ENCODE measurements at regions of chr2 and their contacts with region 1.

Region 1: GRCh38 chr2:15596968-15597367 is 5.3 kb downstream of the DDX1 start:
- DNase-seq: no peak
- H3K4me3 Mint-ChIP-seq: no peak overlapping the region
- H3K27ac Mint-ChIP-seq: no peak overlapping the region
- H3K4me1 Mint-ChIP-seq: peaks cover 25% of the 10 kb centered on the region
- H3K27me3 Mint-ChIP-seq: no peaks in the 10 kb centered on the region

Region 2: DNA sequence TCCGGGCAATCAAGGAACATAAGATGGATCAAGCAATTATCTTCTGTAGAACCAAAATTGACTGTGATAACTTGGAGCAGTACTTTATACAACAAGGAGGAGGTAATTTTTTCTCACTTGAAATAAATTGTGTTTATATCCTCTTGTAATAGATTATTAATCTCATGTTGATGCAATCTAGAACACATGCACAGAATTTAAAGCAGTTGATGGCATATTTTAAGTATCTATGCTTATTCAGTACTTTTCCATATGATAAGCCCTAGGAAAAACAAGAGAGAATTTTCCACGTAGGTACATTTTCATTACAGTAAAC is 26.5 kb after region 1 on chr2:
- CTCF ChIA-PET with region 1: no interaction called
- intact Hi-C with region 1: loop called (anchors 2 kb)
- DNase-seq: no peak
- H3K4me3 Mint-ChIP-seq: no peak overlapping the region
- H3K27ac Mint-ChIP-seq: no peak overlapping the region
- H3K4me1 Mint-ChIP-seq: peaks cover 5% of the 10 kb centered on the region
- H3K27me3 Mint-ChIP-seq: no peaks in the 10 kb centered on the region